ENCODE measurements at regions of chr21 and their contacts with region 1.

Region 1: DNA sequence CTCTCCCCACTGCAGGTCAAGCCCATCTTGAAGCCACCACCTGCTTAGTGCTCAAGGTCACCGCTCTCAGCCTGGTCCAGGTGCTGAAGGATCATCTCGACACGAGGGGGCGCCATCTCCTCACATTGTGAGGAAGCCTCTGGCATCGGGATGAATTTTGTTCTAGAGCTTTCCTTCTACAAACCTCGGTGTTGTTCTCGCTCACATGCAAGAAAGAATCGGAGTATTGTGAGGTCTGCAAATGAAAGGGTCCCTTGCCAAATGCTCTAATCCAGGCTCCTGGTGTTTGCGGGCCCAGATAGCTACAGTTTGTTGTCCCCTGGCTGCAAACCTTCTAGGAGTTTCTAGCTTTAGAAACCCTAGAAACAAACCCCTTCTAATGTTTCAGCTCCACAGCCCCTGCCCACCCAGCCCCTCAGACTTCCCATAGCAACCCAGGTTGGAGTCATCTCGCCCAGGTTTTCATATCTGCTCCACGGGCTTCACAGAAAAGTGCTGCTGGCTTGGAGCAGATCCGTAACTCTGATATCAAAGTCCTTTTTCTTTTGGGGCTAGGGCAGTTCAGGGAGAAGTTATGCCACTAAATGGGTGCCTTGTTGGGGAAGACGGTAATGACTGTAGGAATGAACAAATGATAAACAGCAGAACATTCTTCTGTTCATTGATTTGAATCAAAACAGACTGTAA is 8.6 kb upstream of the ATP5PO start:
- DNase-seq: peak; percentile 89 to 96 (median 92)
- H3K4me3 ChIP-seq: peak overlapping the region in 1 of 3 donors; percentile 43
- H3K27ac ChIP-seq: peak overlapping the region; percentile 72 to 80
- H3K4me1 ChIP-seq: peaks cover 0 to 5% (median 4%) of the 10 kb centered on the region in 3 donors
- H3K27me3 ChIP-seq: no peaks in the 10 kb centered on the region
- CTCF ChIP-seq: peak; percentile 95

Region 2: GRCh38 chr21:34345091-34345871 is 421.1 kb after region 1 on chr21:
- intact Hi-C with region 1: loop called (anchors 5 kb)
- DNase-seq: peak in 3 of 5 donors; percentile 33 to 77 (median 35)
- H3K4me3 ChIP-seq: no peak overlapping the region
- H3K27ac ChIP-seq: no peak overlapping the region
- H3K4me1 ChIP-seq: peaks cover 0 to 2% (median 0%) of the 10 kb centered on the region in 3 donors
- H3K27me3 ChIP-seq: no peaks in the 10 kb centered on the region
- CTCF ChIP-seq: no peak

Measured in kidney (tissue), 22 donors.